A549 (cell line): ENCODE measurements at regions of chr1 and their contacts with region 1.

Region 1: GRCh38 chr1:32263744-32264143 is 12.7 kb downstream of the LCK start:
- DNase-seq: no peak
- ATAC-seq: no peak
- H3K4me3 ChIP-seq: no peak overlapping the region
- H3K27ac ChIP-seq: no peak overlapping the region
- H3K4me1 ChIP-seq: peaks cover 7% of the 10 kb centered on the region; the same call in 2 of the 3 replicates
- CTCF ChIP-seq: no peak
- EP300 ChIP-seq: no peak
- POLR2A ChIP-seq: no peak
- RAD21 ChIP-seq: no peak

Region 2: GRCh38 chr1:32247983-32248889 is 15.5 kb before region 1 on chr1:
- CTCF ChIA-PET with region 1: interaction called, 31 read pairs
- POLR2A ChIA-PET with region 1: no interaction called
- DNase-seq: peak; percentile 72 to 74
- ATAC-seq: peak; percentile 90 to 95
- H3K4me3 ChIP-seq: no peak overlapping the region
- H3K27ac ChIP-seq: peak overlapping the region in 1 of 2 experiments; percentile 57; a peak in 2 of 6 replicates
- H3K4me1 ChIP-seq: peaks cover 3% of the 10 kb centered on the region; the same call in 1 of the 3 replicates
- CTCF ChIP-seq: peak; percentile 66
- EP300 ChIP-seq: no peak
- POLR2A ChIP-seq: no peak
- RAD21 ChIP-seq: peak; percentile 47 to 56

Region 3: GRCh38 chr1:32695098-32695904 is 431.6 kb after region 1 on chr1:
- CTCF ChIA-PET with region 1: no interaction called
- POLR2A ChIA-PET with region 1: no interaction called
- DNase-seq: no peak
- ATAC-seq: peak; percentile 30 to 40; a peak in 3 of 6 replicates
- H3K4me3 ChIP-seq: no peak overlapping the region
- H3K27ac ChIP-seq: no peak overlapping the region; a peak in 1 of 6 replicates
- H3K4me1 ChIP-seq: no peaks in the 10 kb centered on the region
- CTCF ChIP-seq: no peak
- EP300 ChIP-seq: no peak
- POLR2A ChIP-seq: no peak
- RAD21 ChIP-seq: no peak